T-cell (primary cell): ENCODE measurements at regions of chr2 and their contacts with region 1.

Region 1: DNA sequence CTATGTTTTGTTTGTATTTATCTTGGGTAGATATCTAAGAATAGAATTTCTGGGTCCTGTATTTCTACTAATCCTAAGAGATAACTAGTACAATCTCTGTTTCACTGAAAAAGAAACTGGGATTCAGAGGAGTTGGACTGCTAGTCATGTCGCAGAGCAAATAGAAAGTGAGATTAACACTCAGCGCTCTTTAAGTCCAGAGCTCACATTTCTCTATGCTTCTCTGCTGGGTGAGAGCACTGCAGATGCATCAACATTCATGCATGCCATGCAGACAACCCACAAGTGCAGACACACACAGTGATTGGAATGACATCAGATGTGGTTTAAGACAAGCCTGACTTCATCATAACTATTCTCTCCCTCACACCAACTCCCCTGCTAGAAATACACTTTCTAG is 563.8 kb downstream of the TDRD15 start:
- DNase-seq: no peak
- ATAC-seq: no peak
- H3K4me3 ChIP-seq: no peak overlapping the region
- H3K4me3 Mint-ChIP-seq: no peak overlapping the region
- H3K27ac ChIP-seq: no peak overlapping the region
- H3K27ac Mint-ChIP-seq: no peak overlapping the region
- H3K4me1 ChIP-seq: no peaks in the 10 kb centered on the region
- H3K4me1 Mint-ChIP-seq: no peaks in the 10 kb centered on the region
- H3K27me3 ChIP-seq: no peaks in the 10 kb centered on the region
- H3K27me3 Mint-ChIP-seq: no peaks in the 10 kb centered on the region

Region 2: GRCh38 chr2:21395366-21395765 is 292.2 kb before region 1 on chr2:
- CTCF ChIA-PET with region 1: no interaction called
- POLR2A ChIA-PET with region 1: no interaction called
- DNase-seq: no peak
- ATAC-seq: no peak
- H3K4me3 ChIP-seq: no peak overlapping the region
- H3K4me3 Mint-ChIP-seq: no peak overlapping the region
- H3K27ac ChIP-seq: no peak overlapping the region
- H3K27ac Mint-ChIP-seq: no peak overlapping the region
- H3K4me1 ChIP-seq: no peaks in the 10 kb centered on the region
- H3K4me1 Mint-ChIP-seq: no peaks in the 10 kb centered on the region
- H3K27me3 ChIP-seq: peaks cover 0 to 4% of the 10 kb centered on the region in 2 experiments
- H3K27me3 Mint-ChIP-seq: no peaks in the 10 kb centered on the region

Region 3: DNA sequence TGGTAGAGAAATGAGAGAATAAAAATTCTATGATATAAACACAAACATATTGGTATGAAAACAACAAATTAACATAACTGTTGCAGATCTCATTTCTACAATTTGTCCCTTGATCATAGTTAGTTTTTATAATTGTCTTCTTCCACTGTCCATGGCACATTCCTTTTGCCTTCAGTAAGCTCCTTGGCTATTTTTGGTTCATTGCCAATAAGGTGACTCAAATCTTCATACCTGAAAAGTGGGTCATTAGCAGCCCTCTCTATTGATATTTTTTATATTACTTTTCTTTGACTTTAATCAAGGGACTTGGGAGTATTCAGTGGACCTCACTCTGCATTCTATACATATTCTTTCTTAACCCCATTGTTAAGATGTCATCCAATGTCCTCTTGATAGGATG is 10.9 kb before region 1 on chr2:
- CTCF ChIA-PET with region 1: no interaction called
- POLR2A ChIA-PET with region 1: no interaction called
- DNase-seq: no peak
- ATAC-seq: no peak
- H3K4me3 ChIP-seq: no peak overlapping the region
- H3K4me3 Mint-ChIP-seq: no peak overlapping the region
- H3K27ac ChIP-seq: no peak overlapping the region
- H3K27ac Mint-ChIP-seq: no peak overlapping the region
- H3K4me1 ChIP-seq: no peaks in the 10 kb centered on the region
- H3K4me1 Mint-ChIP-seq: no peaks in the 10 kb centered on the region
- H3K27me3 ChIP-seq: no peaks in the 10 kb centered on the region
- H3K27me3 Mint-ChIP-seq: no peaks in the 10 kb centered on the region

Region 4: GRCh38 chr2:22221006-22221405 is 533.4 kb after region 1 on chr2:
- CTCF ChIA-PET with region 1: interaction called in 1 of 2 experiments, 15 read pairs
- POLR2A ChIA-PET with region 1: no interaction called
- DNase-seq: no peak
- ATAC-seq: no peak
- H3K4me3 ChIP-seq: no peak overlapping the region
- H3K4me3 Mint-ChIP-seq: no peak overlapping the region
- H3K27ac ChIP-seq: no peak overlapping the region
- H3K27ac Mint-ChIP-seq: no peak overlapping the region
- H3K4me1 ChIP-seq: no peaks in the 10 kb centered on the region
- H3K4me1 Mint-ChIP-seq: no peaks in the 10 kb centered on the region
- H3K27me3 ChIP-seq: no peaks in the 10 kb centered on the region
- H3K27me3 Mint-ChIP-seq: no peaks in the 10 kb centered on the region